OCI-LY7 (cell line): ENCODE measurements at regions of chr2 and their contacts with region 1.

Region 1: GRCh38 chr2:191566344-191566743 is 111.6 kb upstream of the NABP1 start:
- DNase-seq: peak; percentile 67
- H3K4me3 ChIP-seq: no peak overlapping the region
- H3K27ac ChIP-seq: no peak overlapping the region
- H3K4me1 ChIP-seq: no peaks in the 10 kb centered on the region
- CTCF ChIP-seq: peak; percentile 86

Region 2: DNA sequence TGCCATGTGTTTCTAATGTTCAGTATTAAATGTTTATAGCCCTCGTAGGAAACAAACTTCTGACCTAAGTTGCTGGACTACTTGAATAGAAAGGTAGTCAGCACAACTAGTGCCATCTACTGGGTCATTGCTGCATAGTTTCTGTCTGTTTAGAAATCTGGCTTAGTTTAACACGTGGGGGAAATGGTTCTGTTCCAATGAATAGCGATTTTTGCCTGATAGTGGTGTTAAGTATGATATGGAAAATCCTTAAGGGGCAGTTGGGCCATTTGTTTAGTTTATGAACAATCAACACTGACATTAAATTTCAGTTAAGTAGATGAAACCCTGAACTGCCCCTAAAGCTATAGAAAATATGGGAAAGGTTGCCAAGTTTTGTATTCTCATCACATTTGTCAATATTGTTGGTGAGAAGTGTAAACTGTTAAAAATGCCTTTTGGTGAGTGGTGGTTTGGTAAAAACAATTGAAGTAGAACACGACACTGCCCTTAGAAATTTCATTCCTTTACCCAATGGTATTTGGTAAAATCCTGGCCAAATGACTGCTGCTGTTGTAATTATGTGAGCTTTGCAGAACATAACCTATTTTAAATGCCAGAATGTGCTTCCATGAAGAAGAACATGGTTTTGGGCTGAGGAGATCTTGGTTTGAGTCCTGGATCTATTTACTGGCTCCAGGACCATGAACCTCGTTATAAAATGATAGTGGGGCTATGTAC is 124.8 kb after region 1 on chr2:
- CTCF ChIA-PET with region 1: no interaction called
- POLR2A ChIA-PET with region 1: no interaction called
- intact Hi-C with region 1: loop called (anchors 1 kb)
- DNase-seq: peak; percentile 74
- H3K4me3 ChIP-seq: no peak overlapping the region
- H3K27ac ChIP-seq: no peak overlapping the region
- H3K4me1 ChIP-seq: peaks cover 4% of the 10 kb centered on the region
- CTCF ChIP-seq: peak; percentile 87